ENCODE measurements at regions of chr6 and their contacts with region 1.

Region 1: GRCh38 chr6:31541658-31542521 is at the start of gene DDX39B:
- DNase-seq: peak; percentile 93
- ATAC-seq: peak; percentile 81
- H3K4me3 ChIP-seq: peak within 1 kb of the TSS; percentile 94
- H3K27ac ChIP-seq: peak within 1 kb of the TSS; percentile 97
- H3K4me1 ChIP-seq: no peaks in the 10 kb centered on the region
- H3K27me3 ChIP-seq: no peaks in the 10 kb centered on the region
- CTCF ChIP-seq: no peak
- EP300 ChIP-seq: no peak
- POLR2A ChIP-seq: peak; percentile 96
- RAD21 ChIP-seq: no peak
- polyA plus RNA-seq, gene DDX39B: 271 to 277 TPM

Region 2: DNA sequence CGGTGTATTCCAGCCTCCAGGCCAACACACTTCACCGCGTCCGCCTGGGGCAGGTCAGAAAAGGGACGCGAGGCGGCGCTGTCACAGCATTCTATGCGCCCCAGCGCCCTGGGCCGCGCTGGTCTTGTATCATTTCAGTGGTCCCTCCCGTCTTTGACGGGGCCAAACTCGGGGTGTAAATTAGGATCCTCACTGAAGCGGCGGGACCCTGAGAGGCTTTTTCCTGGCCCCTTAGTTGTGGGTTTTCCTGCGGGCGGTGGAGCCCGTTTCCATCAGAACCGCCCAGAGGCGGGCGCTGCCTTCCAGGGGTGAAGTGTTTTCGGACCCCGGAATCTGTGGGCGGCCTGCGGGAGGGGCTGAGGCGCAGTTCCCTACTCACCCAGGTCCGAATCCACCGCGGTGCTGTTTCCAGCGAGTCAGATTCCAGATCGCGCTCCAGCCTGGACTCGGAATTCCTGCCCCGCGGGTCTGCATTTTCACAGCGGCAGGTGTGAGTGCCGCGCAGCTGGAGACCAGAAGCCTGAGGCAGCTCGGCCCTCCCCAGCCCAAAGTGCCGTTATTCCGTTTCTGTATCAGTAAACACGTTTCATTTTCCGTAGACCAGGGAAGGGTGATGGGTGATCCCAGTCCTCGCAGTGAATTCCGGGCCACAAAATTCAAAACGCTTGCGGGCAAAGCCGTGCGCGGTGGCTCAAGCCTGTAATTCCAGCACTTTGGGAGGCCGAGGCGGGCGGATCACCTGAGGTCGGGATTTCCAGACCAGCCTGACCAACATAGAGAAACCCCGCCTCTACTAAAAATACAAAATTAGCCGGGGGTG is 47.8 kb before region 1 on chr6:
- CTCF ChIA-PET with region 1: interaction called, 100 read pairs
- POLR2A ChIA-PET with region 1: interaction called, 56 read pairs
- RAD21 ChIA-PET with region 1: interaction called, 72 read pairs
- SMC1A ChIA-PET with region 1: interaction called, 63 read pairs
- in situ Hi-C with region 1: loop called (anchors 5 kb)
- intact Hi-C with region 1: loop called (anchors 1 kb)
- DNase-seq: peak; percentile 34
- ATAC-seq: peak; percentile 73
- H3K4me3 ChIP-seq: peak overlapping the region; percentile 76
- H3K27ac ChIP-seq: peak overlapping the region; percentile 65
- H3K4me1 ChIP-seq: 0 out of 2 replicates have a peak, but pooled peaks cover 2% of the 10 kb centered on the region
- H3K27me3 ChIP-seq: no peaks in the 10 kb centered on the region
- CTCF ChIP-seq: peak; percentile 72 to 94 (median 85)
- EP300 ChIP-seq: no peak
- POLR2A ChIP-seq: 0 out of 2 replicates have a peak, but pooled peaks have one; percentile 23
- RAD21 ChIP-seq: peak; percentile 72

Region 3: DNA sequence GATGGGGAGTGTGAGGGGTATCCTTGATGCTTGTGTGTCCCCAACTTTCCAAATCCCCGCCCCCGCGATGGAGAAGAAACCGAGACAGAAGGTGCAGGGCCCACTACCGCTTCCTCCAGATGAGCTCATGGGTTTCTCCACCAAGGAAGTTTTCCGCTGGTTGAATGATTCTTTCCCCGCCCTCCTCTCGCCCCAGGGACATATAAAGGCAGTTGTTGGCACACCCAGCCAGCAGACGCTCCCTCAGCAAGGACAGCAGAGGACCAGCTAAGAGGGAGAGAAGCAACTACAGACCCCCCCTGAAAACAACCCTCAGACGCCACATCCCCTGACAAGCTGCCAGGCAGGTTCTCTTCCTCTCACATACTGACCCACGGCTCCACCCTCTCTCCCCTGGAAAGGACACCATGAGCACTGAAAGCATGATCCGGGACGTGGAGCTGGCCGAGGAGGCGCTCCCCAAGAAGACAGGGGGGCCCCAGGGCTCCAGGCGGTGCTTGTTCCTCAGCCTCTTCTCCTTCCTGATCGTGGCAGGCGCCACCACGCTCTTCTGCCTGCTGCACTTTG is 33.5 kb after region 1 on chr6 and contains the start of gene TNF:
- CTCF ChIA-PET with region 1: interaction called, 2,098 read pairs
- POLR2A ChIA-PET with region 1: interaction called, 164 read pairs
- RAD21 ChIA-PET with region 1: interaction called, 620 read pairs
- SMC1A ChIA-PET with region 1: interaction called, 1,989 read pairs
- in situ Hi-C with region 1: no loop called
- intact Hi-C with region 1: no loop called
- DNase-seq: peak; percentile 91
- ATAC-seq: peak; percentile 44
- H3K4me3 ChIP-seq: peak within 1 kb of the TSS; percentile 91
- H3K27ac ChIP-seq: peak within 1 kb of the TSS; percentile 96
- H3K4me1 ChIP-seq: peaks cover 57% of the 10 kb centered on the region
- H3K27me3 ChIP-seq: no peaks in the 10 kb centered on the region
- CTCF ChIP-seq: no peak
- EP300 ChIP-seq: no peak
- POLR2A ChIP-seq: peak; percentile 99
- RAD21 ChIP-seq: 0 out of 2 replicates have a peak, but pooled peaks have one; percentile 12
- polyA plus RNA-seq, gene TNF: 18.0 to 30.2 TPM

Region 4: GRCh38 chr6:31580807-31581433 is 39.0 kb after region 1 on chr6:
- CTCF ChIA-PET with region 1: interaction called, 2,098 read pairs
- POLR2A ChIA-PET with region 1: interaction called, 164 read pairs
- RAD21 ChIA-PET with region 1: interaction called, 620 read pairs
- SMC1A ChIA-PET with region 1: interaction called, 1,989 read pairs
- in situ Hi-C with region 1: no loop called
- intact Hi-C with region 1: no loop called
- DNase-seq: no peak
- ATAC-seq: peak; percentile 83
- H3K4me3 ChIP-seq: peak overlapping the region; percentile 93
- H3K27ac ChIP-seq: peak overlapping the region; percentile 91
- H3K4me1 ChIP-seq: peaks cover 41% of the 10 kb centered on the region
- H3K27me3 ChIP-seq: no peaks in the 10 kb centered on the region
- CTCF ChIP-seq: peak; percentile 96 to 97 (median 97)
- EP300 ChIP-seq: no peak
- POLR2A ChIP-seq: peak; percentile 87
- RAD21 ChIP-seq: peak; percentile 67

Region 5: GRCh38 chr6:31702819-31703522 is 161.1 kb after region 1 on chr6 and contains the start of gene ABHD16A:
- CTCF ChIA-PET with region 1: no interaction called
- POLR2A ChIA-PET with region 1: interaction called, 10 read pairs
- RAD21 ChIA-PET with region 1: interaction called, 3 read pairs
- SMC1A ChIA-PET with region 1: interaction called, 3 read pairs
- in situ Hi-C with region 1: no loop called
- intact Hi-C with region 1: no loop called
- DNase-seq: peak; percentile 95
- ATAC-seq: peak; percentile 96
- H3K4me3 ChIP-seq: peak within 1 kb of the TSS; percentile 96
- H3K27ac ChIP-seq: peak within 1 kb of the TSS; percentile 91
- H3K4me1 ChIP-seq: peaks cover 9% of the 10 kb centered on the region; the same call in 1 of the 2 replicates
- H3K27me3 ChIP-seq: no peaks in the 10 kb centered on the region
- CTCF ChIP-seq: 0 out of 6 replicates have a peak, but pooled peaks of 1 of the 3 experiments have one; percentile 11
- EP300 ChIP-seq: no peak
- POLR2A ChIP-seq: peak; percentile 88
- RAD21 ChIP-seq: no peak
- polyA plus RNA-seq, gene ABHD16A: 7.5 to 14.5 TPM

Region 6: GRCh38 chr6:31901953-31902643 is 360.2 kb after region 1 on chr6 and contains the start of gene ZBTB12:
- CTCF ChIA-PET with region 1: no interaction called
- POLR2A ChIA-PET with region 1: interaction called, 8 read pairs
- RAD21 ChIA-PET with region 1: no interaction called
- SMC1A ChIA-PET with region 1: no interaction called
- in situ Hi-C with region 1: no loop called
- intact Hi-C with region 1: loop called (anchors 10 kb)
- DNase-seq: peak; percentile 73
- ATAC-seq: peak; percentile 81
- H3K4me3 ChIP-seq: peak within 1 kb of the TSS; percentile 89
- H3K27ac ChIP-seq: peak within 1 kb of the TSS; percentile 49
- H3K4me1 ChIP-seq: peaks cover 11% of the 10 kb centered on the region
- H3K27me3 ChIP-seq: no peaks in the 10 kb centered on the region
- CTCF ChIP-seq: no peak
- EP300 ChIP-seq: no peak
- POLR2A ChIP-seq: peak; percentile 72
- RAD21 ChIP-seq: no peak
- polyA plus RNA-seq, gene ZBTB12: not detected

Region 7: GRCh38 chr6:32393665-32394420 is 852.0 kb after region 1 on chr6:
- CTCF ChIA-PET with region 1: no interaction called
- POLR2A ChIA-PET with region 1: no interaction called
- RAD21 ChIA-PET with region 1: no interaction called
- SMC1A ChIA-PET with region 1: no interaction called
- in situ Hi-C with region 1: no loop called
- intact Hi-C with region 1: no loop called
- DNase-seq: no peak
- ATAC-seq: no peak
- H3K4me3 ChIP-seq: no peak overlapping the region
- H3K27ac ChIP-seq: no peak overlapping the region
- H3K4me1 ChIP-seq: peaks cover 8% of the 10 kb centered on the region
- H3K27me3 ChIP-seq: no peaks in the 10 kb centered on the region
- CTCF ChIP-seq: no peak
- EP300 ChIP-seq: no peak
- POLR2A ChIP-seq: no peak
- RAD21 ChIP-seq: no peak

Measured in GM12878 (cell line).